Activated T-helper 1 cell treated with anti-CD3 and anti-CD28 coated beads, Interleukin-12 subunit alpha, Interleukin-12 subunit beta, Interleukin-2, Interleukin-4 antibody, amounts not matched to agents 30 ng/mL and 10 ng/mL and 1 ng/mL, durations not matched to agents 14 hours and 24 hours and 36 hours (primary cell): ENCODE measurements at regions of chr12 and their contacts with region 1.

Region 1: DNA sequence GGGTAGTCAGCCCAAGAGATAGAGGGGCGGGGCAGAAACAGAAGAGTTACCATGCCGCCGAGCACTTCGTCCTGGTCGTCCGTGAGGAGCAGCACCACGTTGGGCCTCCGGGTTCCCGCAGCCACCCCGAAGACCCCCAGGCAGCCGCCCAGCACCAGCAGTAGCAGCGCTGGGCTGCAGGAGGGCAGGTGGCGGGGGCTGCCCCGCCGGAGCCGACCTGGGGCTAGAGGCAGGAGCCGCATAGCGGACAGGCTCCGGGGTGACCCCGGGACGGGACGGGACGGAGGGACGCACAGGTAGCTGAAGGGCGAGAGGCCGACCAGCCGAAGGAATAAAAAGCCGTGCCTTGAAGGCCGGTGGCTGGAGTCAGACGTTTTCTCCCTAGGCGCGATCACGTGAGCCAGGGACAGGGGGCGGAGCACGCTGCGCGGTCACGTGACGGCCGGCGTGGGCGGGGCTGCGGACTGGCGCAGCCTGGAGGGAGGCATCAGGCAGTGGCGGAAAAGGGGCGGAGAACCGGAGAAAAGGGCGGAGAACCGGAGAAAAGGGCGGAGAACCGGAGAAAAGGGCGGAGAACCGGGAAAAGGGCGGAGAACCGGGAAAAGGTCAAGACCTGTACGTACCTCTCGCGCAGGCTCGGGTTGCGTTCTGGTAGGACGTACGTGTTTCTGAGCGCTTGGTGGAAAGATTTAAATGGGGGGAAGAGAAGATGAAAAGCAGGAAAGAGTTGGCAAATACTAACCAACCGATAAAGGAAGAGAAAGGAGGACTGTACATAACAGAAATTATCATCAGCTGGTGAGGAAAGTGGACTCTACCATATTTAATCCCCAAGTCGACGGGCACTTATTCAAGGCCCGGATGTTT is at the start of gene GNS:
- DNase-seq: peak; percentile 95
- H3K4me3 Mint-ChIP-seq: peak within 1 kb of the TSS; percentile 91
- H3K27ac Mint-ChIP-seq: peak within 1 kb of the TSS; percentile 90
- H3K4me1 Mint-ChIP-seq: peaks cover 45% of the 10 kb centered on the region
- H3K27me3 Mint-ChIP-seq: peaks cover 2% of the 10 kb centered on the region
- total RNA-seq, gene GNS: 20.6 and 21.3 TPM in 2 replicates

Region 2: GRCh38 chr12:63779498-63780481 is 979.5 kb before region 1 on chr12 and contains the start of gene RXYLT1:
- intact Hi-C with region 1: loop called (anchors 5 kb)
- DNase-seq: peak; percentile 75
- H3K4me3 Mint-ChIP-seq: peak within 1 kb of the TSS; percentile 95
- H3K27ac Mint-ChIP-seq: peak within 1 kb of the TSS; percentile 90
- H3K4me1 Mint-ChIP-seq: peaks cover 18% of the 10 kb centered on the region
- H3K27me3 Mint-ChIP-seq: no peaks in the 10 kb centered on the region
- total RNA-seq, gene RXYLT1: 26.5 and 27.3 TPM in 2 replicates

Region 3: DNA sequence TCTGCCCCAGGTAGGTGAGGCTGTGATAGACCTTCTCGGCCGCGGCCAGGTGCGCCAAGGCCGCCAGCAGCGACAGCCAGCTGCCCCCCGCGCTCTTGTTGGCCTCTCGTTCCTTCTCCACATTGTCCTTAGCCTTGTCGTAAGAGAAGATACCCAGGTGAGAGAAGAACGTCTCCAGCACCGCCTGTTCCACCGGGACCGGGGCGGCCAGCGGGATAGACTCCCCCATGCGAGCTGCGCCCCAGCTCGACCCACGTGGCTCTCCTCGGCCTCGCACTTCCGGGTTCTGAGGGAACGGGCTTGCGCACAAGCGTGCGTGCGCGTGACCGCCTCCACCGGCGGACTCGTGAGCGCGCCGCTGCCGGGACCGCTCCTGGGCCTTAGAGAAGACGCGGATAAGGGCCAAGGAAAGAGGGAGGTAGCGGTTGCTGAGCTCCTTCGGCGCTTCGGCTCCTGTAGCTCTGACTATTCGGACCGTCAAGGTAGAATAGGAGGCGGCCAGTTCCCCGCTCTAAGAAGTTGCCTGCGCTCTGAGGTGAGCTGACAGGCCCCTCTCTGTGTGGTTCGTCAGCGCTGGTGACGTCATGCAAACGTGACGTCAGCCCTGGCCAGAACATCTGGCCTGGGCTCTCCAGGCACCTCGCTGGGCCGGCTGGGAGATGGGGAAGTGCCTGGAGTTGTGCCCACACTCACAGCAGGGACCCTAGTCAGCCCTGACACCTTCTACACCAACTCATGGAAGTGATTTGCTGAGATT is 537.1 kb before region 1 on chr12 and contains the start of gene KICS2:
- intact Hi-C with region 1: loop called (anchors 5 kb)
- DNase-seq: peak; percentile 88
- H3K4me3 Mint-ChIP-seq: peak within 1 kb of the TSS; percentile 100
- H3K27ac Mint-ChIP-seq: peak within 1 kb of the TSS; percentile 100
- H3K4me1 Mint-ChIP-seq: peaks cover 33% of the 10 kb centered on the region
- H3K27me3 Mint-ChIP-seq: peaks cover 14% of the 10 kb centered on the region
- total RNA-seq, gene KICS2: 12.7 and 14.9 TPM in 2 replicates

Region 4: GRCh38 chr12:64451687-64452558 is 307.3 kb before region 1 on chr12 and contains the start of gene TBK1:
- intact Hi-C with region 1: loop called (anchors 5 kb)
- DNase-seq: peak; percentile 74
- H3K4me3 Mint-ChIP-seq: peak within 1 kb of the TSS; percentile 97
- H3K27ac Mint-ChIP-seq: peak within 1 kb of the TSS; percentile 94
- H3K4me1 Mint-ChIP-seq: peaks cover 47% of the 10 kb centered on the region
- H3K27me3 Mint-ChIP-seq: no peaks in the 10 kb centered on the region
- total RNA-seq, gene TBK1: 33.6 and 42.4 TPM in 2 replicates

Region 5: DNA sequence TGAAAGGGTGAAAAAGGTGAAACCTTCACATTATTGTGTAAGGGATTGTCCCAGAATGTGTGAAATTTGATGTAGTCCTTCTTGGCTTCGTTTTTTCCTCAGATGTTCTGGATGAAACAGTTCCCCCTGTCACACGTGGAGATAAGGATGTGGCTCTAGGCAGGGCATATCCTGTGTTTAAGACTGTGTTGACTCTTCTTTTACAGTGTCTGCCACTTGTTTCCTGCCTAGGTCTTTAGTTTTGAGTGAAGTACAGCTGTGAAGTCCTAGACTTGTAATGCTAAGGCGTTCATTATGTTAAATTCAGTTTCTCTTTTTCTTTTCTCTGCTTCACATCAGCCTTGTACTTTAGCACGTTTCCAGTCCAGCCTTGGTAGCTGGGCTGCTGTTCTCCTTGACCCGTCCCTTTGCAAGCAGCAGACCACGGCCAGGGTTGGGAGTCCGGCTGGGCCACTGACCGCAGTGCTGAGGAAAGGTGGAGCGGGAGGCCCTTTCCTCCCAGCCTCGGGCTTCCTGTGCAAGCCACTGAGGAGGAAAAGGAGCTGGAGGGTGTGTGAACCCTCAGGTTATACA is 89.9 kb before region 1 on chr12:
- intact Hi-C with region 1: loop called (anchors 2 kb)
- DNase-seq: peak; percentile 53
- H3K4me3 Mint-ChIP-seq: peak overlapping the region; percentile 85
- H3K27ac Mint-ChIP-seq: peak overlapping the region; percentile 94
- H3K4me1 Mint-ChIP-seq: peaks cover 87% of the 10 kb centered on the region
- H3K27me3 Mint-ChIP-seq: no peaks in the 10 kb centered on the region

Region 6: GRCh38 chr12:64744422-64745258 is 14.6 kb before region 1 on chr12:
- intact Hi-C with region 1: loop called (anchors 2 kb)
- DNase-seq: no peak
- H3K4me3 Mint-ChIP-seq: no peak overlapping the region
- H3K27ac Mint-ChIP-seq: no peak overlapping the region
- H3K4me1 Mint-ChIP-seq: no peaks in the 10 kb centered on the region
- H3K27me3 Mint-ChIP-seq: no peaks in the 10 kb centered on the region

Region 7: DNA sequence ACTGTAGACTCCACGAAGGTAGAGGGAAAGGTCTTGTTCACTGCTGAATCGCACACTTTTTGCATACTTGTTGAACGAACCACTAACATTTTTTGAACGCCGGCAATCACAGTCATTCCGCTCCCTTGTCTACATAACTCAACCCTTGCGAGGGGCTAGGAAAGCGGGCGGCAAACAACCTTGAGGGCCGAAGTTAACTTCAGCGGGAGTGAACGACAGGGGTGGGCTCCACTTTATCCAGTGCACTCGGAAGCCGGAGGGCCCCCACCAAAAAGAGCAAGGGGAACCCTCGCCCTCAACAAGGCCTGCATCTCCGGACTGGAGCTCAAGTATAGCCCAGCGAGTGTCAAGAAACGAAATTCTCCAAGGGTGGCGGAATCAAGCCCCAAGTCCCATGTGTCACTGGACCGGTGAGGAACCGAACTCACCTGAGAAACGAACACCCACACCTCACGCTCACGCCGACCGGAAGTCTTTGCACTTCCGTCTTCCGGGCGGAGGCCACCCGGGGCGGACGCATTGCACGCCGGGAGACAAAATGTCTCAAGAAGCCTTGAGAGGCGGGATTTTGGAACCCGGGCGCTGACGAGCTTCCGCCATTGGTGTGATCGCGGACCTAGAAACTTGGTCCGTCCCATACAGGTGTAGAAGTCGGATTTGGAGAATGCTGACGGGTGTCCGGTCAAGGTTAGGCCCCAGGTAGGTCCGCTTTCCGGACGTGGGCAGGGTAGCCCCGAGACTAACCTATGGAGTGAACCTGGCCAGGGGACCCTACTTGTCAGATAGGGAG is 1371.2 kb after region 1 on chr12 and contains the start of gene LLPH:
- intact Hi-C with region 1: loop called (anchors 1 kb)
- DNase-seq: peak; percentile 86
- H3K4me3 Mint-ChIP-seq: peak within 1 kb of the TSS; percentile 98
- H3K27ac Mint-ChIP-seq: peak within 1 kb of the TSS; percentile 93
- H3K4me1 Mint-ChIP-seq: peaks cover 57% of the 10 kb centered on the region
- H3K27me3 Mint-ChIP-seq: no peaks in the 10 kb centered on the region
- total RNA-seq, gene LLPH: 31.3 and 33.6 TPM in 2 replicates